GM10248 (cell line): ENCODE measurements at regions of chr7 and their contacts with region 1.

Region 1: DNA sequence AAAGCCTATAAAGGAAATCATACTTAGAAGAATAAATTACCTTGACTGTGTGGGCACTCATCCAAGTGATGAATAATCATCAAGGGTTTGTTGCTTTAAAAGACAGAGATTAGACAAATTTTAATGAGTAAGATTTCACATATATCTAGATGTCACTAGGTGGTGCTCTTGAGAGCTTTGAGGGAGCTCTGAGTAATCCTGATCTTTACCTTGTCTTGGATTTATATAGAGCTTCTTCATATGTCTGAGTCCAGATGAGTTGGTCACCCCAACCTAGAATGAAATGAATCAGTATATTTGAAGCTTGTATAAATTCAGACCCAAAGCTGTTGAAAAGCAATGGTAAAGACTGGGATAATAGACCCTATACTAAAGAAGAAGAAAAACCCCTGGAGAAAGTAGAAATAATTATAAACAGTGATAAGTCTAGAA is 3.7 kb downstream of the AGR2 start:
- DNase-seq: peak; percentile 24
- CTCF ChIP-seq: peak; percentile 53

Region 2: DNA sequence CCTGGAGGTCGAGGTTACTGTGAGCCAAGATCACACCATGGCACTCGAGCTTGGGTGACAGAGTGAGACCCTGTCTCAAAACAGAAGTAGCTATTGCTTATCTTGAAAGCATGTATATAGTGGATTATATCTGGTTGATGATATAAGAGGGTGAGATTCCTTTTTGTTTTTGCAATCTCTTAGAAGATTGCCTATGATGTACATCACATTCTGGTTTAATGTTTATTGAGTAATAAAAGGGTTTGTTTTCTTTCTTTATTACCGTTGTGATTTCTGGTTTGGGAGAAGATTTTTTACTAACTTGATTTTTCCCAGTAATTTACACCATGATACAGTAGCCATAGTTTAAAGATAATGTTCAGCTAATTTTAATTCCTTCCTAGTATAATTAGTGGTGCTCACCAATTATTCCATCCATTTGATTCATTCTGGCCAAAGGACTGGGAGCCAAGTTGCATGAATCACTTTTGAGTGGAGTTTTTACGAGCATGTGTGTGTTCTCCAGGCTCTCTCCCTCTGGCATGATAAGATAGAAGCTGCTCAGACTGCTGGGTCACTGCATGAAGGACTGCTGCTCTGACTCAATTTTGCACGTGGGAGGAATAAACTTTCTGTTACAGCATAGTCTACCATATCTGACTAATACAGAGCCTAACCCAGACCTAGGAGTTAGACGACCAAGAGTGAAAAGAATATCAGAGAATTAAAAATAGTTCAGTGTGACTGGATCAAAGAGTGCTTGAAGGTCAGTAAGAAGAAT is 61.1 kb before region 1 on chr7:
- CTCF ChIA-PET with region 1: no interaction called
- POLR2A ChIA-PET with region 1: no interaction called
- DNase-seq: no peak
- CTCF ChIP-seq: no peak

Region 3: GRCh38 chr7:16780596-16780995 is 20.5 kb before region 1 on chr7:
- CTCF ChIA-PET with region 1: interaction called, 24 read pairs
- POLR2A ChIA-PET with region 1: no interaction called
- DNase-seq: no peak
- CTCF ChIP-seq: no peak

Region 4: DNA sequence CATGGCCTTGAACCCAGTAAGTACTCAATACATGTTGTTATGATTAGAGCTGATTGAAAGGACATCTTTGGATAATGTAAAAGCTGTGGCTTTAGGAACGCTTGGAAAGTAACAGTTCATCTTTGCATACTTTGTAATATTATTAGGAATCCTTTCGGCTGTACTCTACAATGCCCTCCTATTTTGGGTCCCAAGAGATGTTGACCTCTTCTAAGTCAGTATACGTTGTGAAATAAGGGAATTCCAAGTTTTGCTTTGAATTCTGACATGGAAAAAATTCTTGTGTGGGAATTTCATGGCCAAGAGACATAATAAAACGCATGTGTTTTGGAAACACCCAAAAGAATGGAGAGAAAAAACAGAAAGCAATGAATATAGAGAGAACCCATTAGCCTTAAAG is 72.9 kb after region 1 on chr7:
- CTCF ChIA-PET with region 1: no interaction called
- POLR2A ChIA-PET with region 1: no interaction called
- DNase-seq: no peak
- CTCF ChIP-seq: no peak

Region 5: GRCh38 chr7:16918288-16918895 is 117.3 kb after region 1 on chr7:
- CTCF ChIA-PET with region 1: interaction called, 10 read pairs
- POLR2A ChIA-PET with region 1: no interaction called
- DNase-seq: no peak
- CTCF ChIP-seq: peak; percentile 58